HEK293 (cell line): ENCODE measurements at regions of chr10 and their contacts with region 1.

Region 1: DNA sequence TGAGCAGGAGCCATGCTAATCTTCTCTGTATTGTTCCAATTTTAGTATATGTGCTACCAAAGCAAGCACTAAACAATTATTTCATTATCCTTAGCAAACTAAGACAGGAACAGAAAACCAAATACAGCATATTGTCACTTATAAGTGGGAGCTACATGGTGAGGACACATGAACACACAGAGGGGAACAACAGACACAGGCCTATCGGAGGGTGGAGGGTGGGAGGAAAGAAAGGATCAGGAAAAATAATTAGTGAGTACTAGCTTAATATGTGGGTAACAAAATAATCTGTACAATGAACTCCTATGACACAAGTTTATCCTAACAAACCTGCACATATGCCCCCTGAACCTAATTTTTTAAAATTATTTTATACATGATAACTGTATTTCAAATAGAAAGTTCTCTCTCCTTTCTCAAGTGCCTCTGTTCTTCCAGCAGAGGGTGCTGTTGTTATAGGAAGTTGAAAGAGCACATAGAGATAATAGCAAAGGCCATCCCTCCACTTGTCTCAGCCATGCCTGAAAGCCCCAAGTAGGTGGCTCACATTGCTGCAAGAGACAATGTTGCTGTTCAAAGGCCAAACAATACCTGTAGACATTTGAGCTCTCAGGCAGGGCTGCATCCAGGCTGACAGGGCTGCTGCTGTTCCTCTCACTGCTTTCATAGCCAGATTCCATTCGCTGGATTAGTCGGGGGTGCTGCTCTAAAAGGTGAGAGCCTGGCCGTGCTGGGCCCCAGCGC is 33.4 kb upstream of the PPP3CB start:
- H3K4me3 ChIP-seq: no peak overlapping the region
- H3K27ac ChIP-seq: no peak overlapping the region
- H3K4me1 ChIP-seq: no peaks in the 10 kb centered on the region
- CTCF ChIP-seq: peak; percentile 77

Region 2: DNA sequence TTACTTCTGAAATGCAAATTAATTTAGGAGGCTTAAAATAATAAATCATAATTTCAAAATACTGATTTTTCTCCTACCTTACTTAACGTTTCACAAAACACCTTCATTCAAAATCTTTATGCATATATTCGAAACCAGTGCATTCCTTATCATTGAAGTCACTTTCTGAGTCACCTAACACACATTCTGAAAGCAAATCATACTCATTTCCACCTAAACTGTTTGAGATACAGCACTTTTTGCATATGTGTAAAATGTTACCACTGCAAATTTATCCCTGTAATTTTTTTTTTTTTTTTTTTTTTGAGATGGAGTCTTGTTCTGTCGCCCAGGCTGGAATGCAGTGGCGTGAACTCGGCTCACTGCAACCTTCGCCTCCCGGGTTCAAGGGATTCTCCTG is 49.1 kb before region 1 on chr10:
- CTCF ChIA-PET with region 1: no interaction called
- POLR2A ChIA-PET with region 1: no interaction called
- H3K4me3 ChIP-seq: no peak overlapping the region
- H3K27ac ChIP-seq: no peak overlapping the region
- H3K4me1 ChIP-seq: no peaks in the 10 kb centered on the region
- CTCF ChIP-seq: no peak

Region 3: DNA sequence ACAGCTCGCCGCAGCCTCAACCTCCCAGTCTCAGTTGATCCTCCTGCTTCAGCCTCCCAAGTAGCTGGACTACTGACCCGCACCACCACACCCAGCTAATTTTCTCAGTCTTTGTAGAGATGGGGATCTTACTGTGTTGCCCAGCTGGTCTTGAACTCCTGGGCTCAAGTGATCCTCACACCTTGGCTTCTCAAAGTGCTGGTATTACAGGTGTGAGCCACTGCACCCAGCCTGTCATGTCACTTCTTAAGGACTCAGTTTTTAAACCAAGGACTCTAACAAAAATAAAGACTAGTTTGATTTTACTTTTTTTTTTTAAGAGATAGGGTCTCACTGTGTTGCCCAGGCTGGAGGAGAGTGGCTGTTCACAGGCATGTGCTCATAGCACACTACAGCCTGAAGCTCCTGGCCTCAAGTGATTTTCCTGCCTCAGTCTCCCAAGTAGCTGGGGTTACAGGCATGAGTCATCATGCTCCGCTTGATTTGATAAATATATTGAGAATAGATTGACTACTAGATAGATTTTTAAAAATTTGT is 17.0 kb before region 1 on chr10:
- CTCF ChIA-PET with region 1: interaction called, 24 read pairs
- POLR2A ChIA-PET with region 1: no interaction called
- H3K4me3 ChIP-seq: no peak overlapping the region
- H3K27ac ChIP-seq: no peak overlapping the region
- H3K4me1 ChIP-seq: no peaks in the 10 kb centered on the region
- CTCF ChIP-seq: no peak

Region 4: GRCh38 chr10:73545357-73545756 is 16.1 kb after region 1 on chr10:
- CTCF ChIA-PET with region 1: interaction called, 10 read pairs
- POLR2A ChIA-PET with region 1: no interaction called
- H3K4me3 ChIP-seq: no peak overlapping the region
- H3K27ac ChIP-seq: no peak overlapping the region
- H3K4me1 ChIP-seq: no peaks in the 10 kb centered on the region
- CTCF ChIP-seq: no peak

Region 5: DNA sequence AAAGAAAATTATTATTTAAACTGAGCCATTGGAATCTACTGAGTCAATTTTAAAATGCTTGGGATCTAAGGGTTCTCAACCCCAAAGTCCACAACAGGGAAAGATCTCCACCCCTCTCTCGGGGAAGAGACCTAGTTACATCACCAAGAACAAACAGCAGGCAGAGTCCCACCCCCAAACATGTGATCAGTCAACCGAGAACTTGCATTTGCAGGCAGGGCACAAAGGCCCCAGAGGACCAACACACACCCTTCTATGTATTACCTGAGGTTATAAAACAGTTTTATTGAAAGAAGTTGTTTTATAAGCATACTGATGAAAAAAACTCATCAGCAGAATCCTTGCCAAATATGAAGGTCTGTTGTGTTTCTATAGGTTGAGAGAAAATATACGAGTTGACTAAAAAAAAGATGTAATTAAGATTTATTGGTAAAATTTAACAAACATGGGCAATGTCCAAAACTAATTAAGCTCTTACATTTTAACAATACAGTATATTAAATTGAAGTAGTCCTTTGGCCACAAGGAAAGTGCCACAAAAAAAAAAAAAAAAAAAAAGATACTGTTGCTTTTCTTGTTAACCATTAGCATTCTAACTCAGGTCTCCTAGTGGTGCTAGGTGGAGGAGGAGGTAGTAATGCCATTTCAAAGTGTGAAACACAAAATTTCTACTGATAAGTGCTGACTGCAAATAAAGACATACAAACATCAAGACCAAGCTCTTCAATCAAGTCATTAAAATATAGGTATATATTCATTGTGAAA is 62.9 kb after region 1 on chr10:
- CTCF ChIA-PET with region 1: interaction called, 16 read pairs
- POLR2A ChIA-PET with region 1: no interaction called
- H3K4me3 ChIP-seq: no peak overlapping the region
- H3K27ac ChIP-seq: peak overlapping the region; percentile 29; the same call in 1 of the 2 replicates
- H3K4me1 ChIP-seq: peaks cover 14% of the 10 kb centered on the region; the same call in 1 of the 2 replicates
- CTCF ChIP-seq: no peak

Region 6: GRCh38 chr10:73625884-73626752 is 96.9 kb after region 1 on chr10:
- CTCF ChIA-PET with region 1: interaction called, 21 read pairs
- POLR2A ChIA-PET with region 1: interaction called, 5 read pairs
- H3K4me3 ChIP-seq: peak overlapping the region; percentile 80
- H3K27ac ChIP-seq: peak overlapping the region; percentile 60
- H3K4me1 ChIP-seq: no peaks in the 10 kb centered on the region
- CTCF ChIP-seq: no peak

Region 7: GRCh38 chr10:73634421-73634820 is 105.2 kb after region 1 on chr10:
- CTCF ChIA-PET with region 1: interaction called, 168 read pairs
- POLR2A ChIA-PET with region 1: no interaction called
- H3K4me3 ChIP-seq: no peak overlapping the region
- H3K27ac ChIP-seq: no peak overlapping the region
- H3K4me1 ChIP-seq: no peaks in the 10 kb centered on the region
- CTCF ChIP-seq: no peak

Region 8: GRCh38 chr10:73644015-73644743 is 114.9 kb after region 1 on chr10:
- CTCF ChIA-PET with region 1: interaction called, 168 read pairs
- POLR2A ChIA-PET with region 1: interaction called, 4 read pairs
- H3K4me3 ChIP-seq: no peak overlapping the region
- H3K27ac ChIP-seq: no peak overlapping the region
- H3K4me1 ChIP-seq: no peaks in the 10 kb centered on the region
- CTCF ChIP-seq: peak; percentile 79